Activated CD4-positive, alpha-beta memory T cell treated with anti-CD3 and anti-CD28 coated beads, Interleukin-2, amount 10 ng/mL, durations not matched to agents 7 days and 5 days (primary cell): ENCODE measurements at regions of chr10 and their contacts with region 1.

Region 1: DNA sequence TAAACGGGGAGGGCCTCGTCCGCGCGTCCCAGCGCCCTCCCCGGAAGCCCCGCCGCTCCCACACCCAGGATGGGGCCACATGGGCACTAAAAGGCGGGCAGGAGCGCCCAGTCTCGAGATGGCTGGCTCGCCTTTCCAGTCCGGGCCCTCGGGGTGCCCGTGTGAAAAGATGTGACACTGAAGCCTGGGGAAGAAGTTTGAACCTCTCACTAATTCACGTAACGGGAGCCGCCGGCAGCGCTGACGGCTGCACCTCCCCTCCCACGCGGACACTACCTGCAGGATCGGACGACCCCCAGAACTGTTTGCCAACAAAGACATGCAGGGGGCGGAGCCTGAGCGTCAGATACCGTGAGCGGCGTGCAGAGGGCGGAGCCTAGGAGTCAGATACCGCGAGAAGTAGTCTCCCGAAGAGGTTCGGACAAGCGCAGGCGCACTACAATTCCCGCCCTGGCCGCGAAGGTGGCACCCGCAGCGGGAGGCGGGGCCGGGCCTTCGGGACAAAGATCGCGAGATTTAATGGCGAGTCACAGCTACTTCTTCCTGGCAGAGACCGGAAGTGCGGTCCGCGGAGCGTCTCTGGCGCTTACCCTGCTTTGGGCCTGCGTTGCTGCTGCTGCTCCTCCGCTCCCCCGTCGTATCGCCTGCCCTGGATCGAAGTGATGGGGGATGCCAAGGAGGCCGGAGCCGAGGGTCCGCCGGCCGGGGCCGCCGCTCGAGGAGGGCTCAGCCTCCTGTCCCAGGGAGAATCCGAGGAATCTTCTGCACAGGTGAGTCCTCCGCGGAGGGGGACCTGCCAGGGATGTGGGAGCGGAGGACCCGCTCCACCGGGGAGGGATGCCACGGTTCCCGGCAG is at the start of gene EDRF1:
- DNase-seq: peak; percentile 100
- H3K4me3 Mint-ChIP-seq: peak within 1 kb of the TSS; percentile 93
- H3K27ac Mint-ChIP-seq: peak within 1 kb of the TSS; percentile 94
- H3K4me1 Mint-ChIP-seq: peaks cover 36% of the 10 kb centered on the region
- H3K27me3 Mint-ChIP-seq: no peaks in the 10 kb centered on the region
- total RNA-seq, gene EDRF1: 31.3 to 33.8 TPM

Region 2: GRCh38 chr10:125707541-125708468 is 11.6 kb before region 1 on chr10:
- CTCF ChIA-PET with region 1: no interaction called
- POLR2A ChIA-PET with region 1: no interaction called
- DNase-seq: no peak
- H3K4me3 Mint-ChIP-seq: no peak overlapping the region
- H3K27ac Mint-ChIP-seq: no peak overlapping the region
- H3K4me1 Mint-ChIP-seq: no peaks in the 10 kb centered on the region
- H3K27me3 Mint-ChIP-seq: peaks cover 19% of the 10 kb centered on the region

Region 3: DNA sequence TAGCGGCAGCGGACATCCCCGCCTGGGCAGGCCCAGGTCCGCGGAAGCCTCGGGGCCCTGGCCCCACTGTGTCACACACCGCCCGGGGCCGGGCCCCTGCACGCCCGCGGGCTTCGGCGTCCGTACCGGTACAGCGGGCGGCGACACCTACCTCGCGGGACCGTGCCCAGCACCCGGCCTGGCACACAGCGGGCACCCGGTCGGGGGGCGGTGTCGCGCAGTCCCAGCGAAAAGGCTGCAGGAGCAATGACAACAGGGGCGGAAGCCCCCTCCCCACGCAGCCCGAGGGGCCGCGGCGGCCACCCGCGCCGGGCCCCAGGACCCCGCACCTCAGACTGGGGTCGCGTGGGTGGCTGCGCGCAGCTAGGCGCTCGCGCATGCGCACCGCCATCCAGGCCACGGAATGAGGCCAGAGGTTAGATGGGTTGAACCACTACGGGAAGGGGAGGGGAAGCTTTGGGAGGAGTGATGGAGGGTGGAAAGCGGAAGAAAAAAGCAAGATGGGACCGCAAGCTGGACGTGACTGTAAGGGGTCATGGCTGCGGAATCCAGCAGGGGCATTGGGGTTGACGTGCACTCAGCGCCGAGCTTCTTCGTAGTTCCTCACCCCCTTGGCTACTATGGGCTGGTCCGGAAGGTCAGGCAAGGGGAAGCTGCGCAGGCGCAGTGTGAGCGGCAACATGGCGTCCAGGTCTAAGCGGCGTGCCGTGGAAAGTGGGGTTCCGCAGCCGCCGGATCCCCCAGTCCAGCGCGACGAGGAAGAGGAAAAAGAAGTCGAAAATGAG is 103.7 kb after region 1 on chr10 and contains the starts of genes BCCIP and UROS:
- CTCF ChIA-PET with region 1: no interaction called
- POLR2A ChIA-PET with region 1: interaction called, 20 read pairs
- DNase-seq: peak; percentile 91
- H3K4me3 Mint-ChIP-seq: peak within 1 kb of the TSS; percentile 70
- H3K27ac Mint-ChIP-seq: no peak within 1 kb of the TSS
- H3K4me1 Mint-ChIP-seq: peaks cover 32% of the 10 kb centered on the region
- H3K27me3 Mint-ChIP-seq: no peaks in the 10 kb centered on the region
- total RNA-seq, gene BCCIP: 44.5 to 48.8 TPM
- total RNA-seq, gene UROS: 35.9 to 38.3 TPM

Region 4: DNA sequence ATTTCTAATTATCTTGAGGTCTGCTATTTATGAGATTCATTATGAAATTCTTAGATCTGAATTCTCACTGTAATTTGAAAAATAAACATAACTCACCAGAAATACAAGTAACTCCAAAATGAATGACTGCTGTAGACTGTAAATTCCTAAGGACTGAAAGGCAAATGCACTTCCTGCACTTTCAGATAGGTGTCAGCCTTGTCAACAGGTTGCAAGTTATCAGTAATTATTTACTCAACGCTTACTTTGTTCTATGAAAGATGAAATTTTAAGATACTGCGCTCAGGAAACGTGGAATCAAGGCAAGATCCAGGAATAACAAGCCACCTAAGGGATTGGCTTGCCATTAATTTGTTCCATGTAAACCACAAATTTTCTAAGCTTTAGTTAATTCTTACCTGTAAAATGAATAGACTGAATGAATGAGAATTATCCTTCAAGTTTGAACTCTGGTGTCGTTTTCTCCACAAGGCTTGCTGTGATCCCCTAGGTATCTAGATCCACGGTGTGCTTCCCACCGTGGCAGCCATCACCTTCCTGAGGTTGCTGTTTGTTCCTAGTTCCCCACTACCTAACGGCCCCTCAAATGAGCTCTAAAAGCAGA is 149.1 kb after region 1 on chr10:
- CTCF ChIA-PET with region 1: no interaction called
- POLR2A ChIA-PET with region 1: no interaction called
- DNase-seq: no peak
- H3K4me3 Mint-ChIP-seq: no peak overlapping the region
- H3K27ac Mint-ChIP-seq: no peak overlapping the region
- H3K4me1 Mint-ChIP-seq: no peaks in the 10 kb centered on the region
- H3K27me3 Mint-ChIP-seq: no peaks in the 10 kb centered on the region